ENCODE measurements at regions of chr2 and their contacts with region 1.

Region 1: DNA sequence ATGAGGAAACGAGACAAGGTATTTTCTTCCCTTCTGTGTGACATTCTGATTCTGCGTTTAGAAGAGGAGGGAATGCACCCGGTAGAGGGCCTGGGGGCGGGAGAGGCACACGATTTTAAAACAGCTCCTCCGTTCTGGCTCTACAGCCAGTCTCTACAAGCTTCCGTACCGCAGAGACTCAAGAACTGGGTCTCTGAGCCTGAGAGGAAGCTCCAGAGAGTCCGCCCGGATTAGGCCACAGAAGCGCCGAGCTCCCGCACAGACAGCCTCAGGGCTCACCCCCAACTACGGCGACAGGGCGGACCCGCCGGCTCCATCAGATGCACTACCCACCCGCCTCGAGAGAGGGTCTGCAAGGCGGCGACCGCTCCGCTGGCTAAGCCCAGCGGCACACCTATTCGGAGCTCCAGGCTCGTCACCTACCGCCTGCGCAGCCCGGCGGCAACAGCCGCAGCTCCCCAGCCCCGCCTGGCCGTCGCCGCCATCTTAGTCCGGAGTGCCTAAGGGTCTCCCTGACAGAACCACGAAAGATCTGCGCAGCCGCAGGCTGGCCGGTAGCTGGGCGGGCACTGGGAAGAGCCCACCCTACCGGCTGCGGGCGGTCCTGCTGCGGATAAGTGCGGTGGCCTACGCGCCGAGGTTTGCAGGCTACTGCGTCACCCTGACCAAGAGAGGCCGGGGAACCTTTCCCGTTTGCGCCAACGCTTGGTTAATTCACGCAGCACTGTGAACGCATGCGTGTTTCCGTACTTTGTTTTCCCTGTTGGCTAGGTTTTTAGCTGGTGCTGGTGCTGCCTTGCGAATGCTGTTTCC is at the start of gene NFU1:
- DNase-seq: peak; percentile 94
- ATAC-seq: peak; percentile 94
- H3K4me3 ChIP-seq: peak within 1 kb of the TSS; percentile 67 to 92 (median 78)
- H3K4me3 Mint-ChIP-seq: peak within 1 kb of the TSS; percentile 97
- H3K27ac ChIP-seq: peak within 1 kb of the TSS; percentile 91 to 93
- H3K27ac Mint-ChIP-seq: peak within 1 kb of the TSS; percentile 99
- H3K4me1 ChIP-seq: peaks cover 27 to 33% of the 10 kb centered on the region in 2 donors
- H3K4me1 Mint-ChIP-seq: peaks cover 41% of the 10 kb centered on the region
- H3K27me3 ChIP-seq: no peaks in the 10 kb centered on the region
- H3K27me3 Mint-ChIP-seq: no peaks in the 10 kb centered on the region
- CTCF ChIP-seq: peak; percentile 74
- total RNA-seq, gene NFU1: 33.8 and 40.6 TPM in 2 replicates

Region 2: GRCh38 chr2:68448671-68449653 is 988.2 kb before region 1 on chr2:
- CTCF ChIA-PET with region 1: no interaction called
- POLR2A ChIA-PET with region 1: no interaction called
- intact Hi-C with region 1: no loop called
- DNase-seq: no peak
- ATAC-seq: peak; percentile 53
- H3K4me3 ChIP-seq: no peak overlapping the region
- H3K4me3 Mint-ChIP-seq: no peak overlapping the region
- H3K27ac ChIP-seq: no peak overlapping the region
- H3K27ac Mint-ChIP-seq: no peak overlapping the region
- H3K4me1 ChIP-seq: no peaks in the 10 kb centered on the region
- H3K4me1 Mint-ChIP-seq: no peaks in the 10 kb centered on the region
- H3K27me3 ChIP-seq: no peaks in the 10 kb centered on the region
- H3K27me3 Mint-ChIP-seq: no peaks in the 10 kb centered on the region
- CTCF ChIP-seq: no peak

Region 3: GRCh38 chr2:69386789-69387734 is 50.1 kb before region 1 on chr2 and contains the start of gene GFPT1:
- CTCF ChIA-PET with region 1: interaction called, 3 read pairs
- POLR2A ChIA-PET with region 1: interaction called, 3 read pairs
- intact Hi-C with region 1: loop called (anchors 1 kb)
- DNase-seq: peak; percentile 94
- ATAC-seq: peak; percentile 97
- H3K4me3 ChIP-seq: peak within 1 kb of the TSS; percentile 52 to 90 (median 82)
- H3K4me3 Mint-ChIP-seq: peak within 1 kb of the TSS; percentile 90
- H3K27ac ChIP-seq: peak within 1 kb of the TSS; percentile 62 to 70
- H3K27ac Mint-ChIP-seq: peak within 1 kb of the TSS; percentile 85
- H3K4me1 ChIP-seq: peaks cover 15 to 16% of the 10 kb centered on the region in 2 donors
- H3K4me1 Mint-ChIP-seq: peaks cover 30% of the 10 kb centered on the region
- H3K27me3 ChIP-seq: no peaks in the 10 kb centered on the region
- H3K27me3 Mint-ChIP-seq: no peaks in the 10 kb centered on the region
- CTCF ChIP-seq: no peak
- total RNA-seq, gene GFPT1: 15.0 and 18.1 TPM in 2 replicates

Region 4: GRCh38 chr2:69559442-69560146 is 122.5 kb after region 1 on chr2:
- CTCF ChIA-PET with region 1: interaction called, 25 read pairs
- POLR2A ChIA-PET with region 1: interaction called, 3 read pairs
- intact Hi-C with region 1: loop called (anchors 2 kb)
- DNase-seq: peak; percentile 51
- ATAC-seq: peak; percentile 62
- H3K4me3 ChIP-seq: no peak overlapping the region
- H3K4me3 Mint-ChIP-seq: no peak overlapping the region
- H3K27ac ChIP-seq: no peak overlapping the region
- H3K27ac Mint-ChIP-seq: no peak overlapping the region
- H3K4me1 ChIP-seq: peaks cover 0 to 4% of the 10 kb centered on the region in 2 donors
- H3K4me1 Mint-ChIP-seq: peaks cover 4% of the 10 kb centered on the region
- H3K27me3 ChIP-seq: peaks cover 0 to 5% (median 0%) of the 10 kb centered on the region in 4 experiments
- H3K27me3 Mint-ChIP-seq: peaks cover 21% of the 10 kb centered on the region
- CTCF ChIP-seq: peak; percentile 55

Measured in B cell (primary cell).